Left lung (tissue), 14 donors: ENCODE measurements at regions of chr10 and their contacts with region 1.

Region 1: GRCh38 chr10:13371897-13372470 is 23.9 kb upstream of the SEPHS1 start:
- DNase-seq: peak in 3 of 4 donors; percentile 63 to 88 (median 64)
- ATAC-seq: peak; percentile 100
- H3K4me3 ChIP-seq: no peak overlapping the region
- H3K27ac ChIP-seq: no peak overlapping the region
- H3K4me1 ChIP-seq: no peaks in the 10 kb centered on the region
- H3K27me3 ChIP-seq: no peaks in the 10 kb centered on the region
- CTCF ChIP-seq: peak; percentile 91 to 94

Region 2: DNA sequence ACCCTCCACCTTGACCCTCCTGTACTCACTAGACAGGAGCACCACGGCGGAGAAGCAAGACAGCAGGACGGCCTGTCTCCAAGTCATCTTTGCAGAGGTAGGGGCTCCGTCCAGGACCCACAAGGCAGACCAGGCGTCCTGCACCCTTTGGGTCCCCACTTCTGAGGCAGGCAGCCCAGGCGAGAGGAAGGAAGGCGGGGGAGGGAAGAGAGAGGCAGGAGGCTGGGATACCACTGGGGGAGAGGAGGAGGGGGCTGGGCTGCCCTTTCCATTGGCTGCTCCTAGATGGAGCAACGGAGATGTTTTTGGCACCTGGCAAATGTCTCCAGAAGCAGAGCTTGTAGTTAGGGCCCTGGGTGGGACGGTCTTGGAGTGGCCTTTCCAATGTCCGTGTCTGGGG is 137.8 kb before region 1 on chr10 and contains the start of gene UCMA:
- intact Hi-C with region 1: no loop called
- DNase-seq: no peak
- ATAC-seq: no peak
- H3K4me3 ChIP-seq: no peak within 1 kb of the TSS
- H3K27ac ChIP-seq: no peak within 1 kb of the TSS
- H3K4me1 ChIP-seq: no peaks in the 10 kb centered on the region
- H3K27me3 ChIP-seq: peaks cover 0 to 15% of the 10 kb centered on the region in 2 donors
- CTCF ChIP-seq: no peak
- polyA plus RNA-seq, gene UCMA: 0.25 to 0.57 (median 0.34) TPM in 5 of 6 donors, not detected in the other

Region 3: GRCh38 chr10:13440185-13441061 is 68.4 kb after region 1 on chr10:
- intact Hi-C with region 1: loop called in 1 of 2 experiments (anchors 5 kb)
- DNase-seq: peak; percentile 18 to 88 (median 50)
- ATAC-seq: peak; percentile 99
- H3K4me3 ChIP-seq: peak overlapping the region in 1 of 2 donors; percentile 10
- H3K27ac ChIP-seq: no peak overlapping the region
- H3K4me1 ChIP-seq: peaks cover 14 to 17% of the 10 kb centered on the region in 2 donors
- H3K27me3 ChIP-seq: peaks cover 5 to 59% of the 10 kb centered on the region in 2 donors
- CTCF ChIP-seq: peak; percentile 62 to 76

Region 4: DNA sequence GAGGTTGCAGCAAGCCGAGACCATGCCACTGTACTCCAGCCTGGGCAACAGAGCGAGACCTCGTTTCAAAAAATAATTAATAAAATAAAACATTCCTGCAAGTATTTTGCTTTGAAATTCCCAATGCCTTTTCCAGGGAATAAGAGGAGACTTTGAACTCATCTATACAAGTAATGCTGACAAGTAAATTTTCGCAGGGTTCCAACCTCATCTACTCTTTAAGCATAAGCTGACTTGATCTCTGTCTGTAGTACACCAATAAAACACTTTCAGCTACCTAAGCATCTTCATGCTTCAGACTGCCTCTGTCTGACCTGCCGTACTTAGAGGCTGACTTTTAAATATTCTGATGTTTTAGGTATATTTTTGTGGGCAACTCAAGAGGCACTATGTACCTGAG is 170.5 kb after region 1 on chr10:
- intact Hi-C with region 1: loop called in 1 of 2 experiments (anchors 10 kb)
- DNase-seq: no peak
- ATAC-seq: no peak
- H3K4me3 ChIP-seq: no peak overlapping the region
- H3K27ac ChIP-seq: no peak overlapping the region
- H3K4me1 ChIP-seq: no peaks in the 10 kb centered on the region
- H3K27me3 ChIP-seq: peaks cover 0 to 23% of the 10 kb centered on the region in 2 donors
- CTCF ChIP-seq: no peak